ENCODE measurements at regions of chr6 and their contacts with region 1.

Region 1: DNA sequence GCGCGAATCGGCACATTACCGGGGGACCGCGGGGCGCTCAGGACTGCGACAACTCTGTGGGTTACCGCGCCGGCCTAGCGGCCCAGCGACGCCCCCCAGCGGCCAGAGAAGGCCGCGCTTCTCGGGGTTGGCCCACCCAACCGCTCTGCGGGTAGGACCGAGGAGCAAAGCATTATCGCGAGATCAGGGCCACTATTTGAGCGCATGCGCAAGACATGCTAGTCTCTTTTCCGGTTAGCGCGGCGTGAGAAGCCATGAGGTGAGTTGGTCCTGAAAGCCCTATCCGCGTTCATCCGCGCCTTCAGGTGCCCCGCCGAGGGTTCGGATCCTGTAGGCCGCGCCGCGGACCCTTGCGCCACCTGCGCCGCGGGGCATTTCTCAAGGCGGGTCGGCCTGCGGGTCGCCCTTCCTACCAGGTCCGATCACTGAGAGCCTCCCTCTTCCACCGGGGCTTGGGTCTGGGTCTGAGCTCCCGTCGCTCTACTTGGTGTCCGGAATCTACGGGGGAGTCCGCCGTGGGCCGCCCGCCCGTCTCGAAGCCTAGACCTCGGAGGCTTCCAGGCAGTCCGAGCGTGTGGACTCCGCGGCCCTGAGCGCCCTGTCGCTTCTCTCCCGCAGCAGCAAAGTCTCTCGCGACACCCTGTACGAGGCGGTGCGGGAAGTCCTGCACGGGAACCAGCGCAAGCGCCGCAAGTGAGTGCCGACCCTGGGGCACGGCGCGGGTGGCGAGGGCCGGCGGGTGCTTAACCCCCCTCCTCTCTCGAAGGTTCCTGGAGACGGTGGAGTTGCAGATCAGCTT is at the start of gene RPL10A:
- DNase-seq: peak; percentile 93
- H3K4me3 Mint-ChIP-seq: peak within 1 kb of the TSS; percentile 97
- H3K27ac Mint-ChIP-seq: peak within 1 kb of the TSS; percentile 98
- H3K4me1 Mint-ChIP-seq: peaks cover 36% of the 10 kb centered on the region
- H3K27me3 Mint-ChIP-seq: no peaks in the 10 kb centered on the region
- total RNA-seq, gene RPL10A: 1,580 and 1,584 TPM in 2 replicates

Region 2: DNA sequence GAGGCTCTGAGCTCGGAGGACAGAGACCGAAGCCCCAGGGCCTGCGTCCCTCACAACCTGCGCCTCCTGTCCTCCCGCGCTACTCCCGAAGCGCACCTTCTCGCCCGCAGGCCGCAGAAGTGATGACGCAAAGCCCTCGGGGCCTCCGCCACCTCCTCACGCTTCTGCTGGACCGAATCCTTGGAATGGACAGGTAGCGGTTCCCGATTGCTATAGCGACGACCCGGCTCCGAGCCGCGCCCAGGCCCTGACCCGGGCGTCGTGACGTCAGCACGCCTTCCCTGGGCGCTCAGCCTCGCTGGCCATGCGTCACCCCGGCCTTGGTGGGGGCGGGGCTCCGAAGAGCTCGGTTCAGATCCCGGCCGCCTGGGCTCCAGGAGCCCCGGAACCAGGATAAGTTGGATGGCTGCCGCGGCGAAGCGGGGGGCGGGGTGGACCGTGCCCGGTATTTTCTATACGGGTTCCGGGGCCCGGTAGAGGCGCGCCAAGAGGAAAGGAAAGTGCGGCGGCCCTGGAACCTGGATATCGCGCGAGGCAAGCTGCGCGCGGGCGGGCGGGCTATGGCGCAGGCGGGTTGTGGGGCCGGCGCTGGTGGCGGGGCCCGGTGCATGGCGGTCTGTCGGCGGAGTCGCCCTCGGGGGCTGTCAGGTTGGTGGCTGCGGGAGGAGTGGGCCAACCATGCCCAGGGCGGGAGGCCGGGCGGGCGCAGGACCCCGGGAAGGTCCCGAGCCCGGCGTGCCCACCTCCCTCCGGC is 209.0 kb before region 1 on chr6 and contains the start of gene ZNF76:
- intact Hi-C with region 1: loop called (anchors 1 kb)
- DNase-seq: peak; percentile 87
- H3K4me3 Mint-ChIP-seq: peak within 1 kb of the TSS; percentile 96
- H3K27ac Mint-ChIP-seq: peak within 1 kb of the TSS; percentile 88
- H3K4me1 Mint-ChIP-seq: peaks cover 40% of the 10 kb centered on the region
- H3K27me3 Mint-ChIP-seq: no peaks in the 10 kb centered on the region
- total RNA-seq, gene ZNF76: 32.8 and 33.1 TPM in 2 replicates

Region 3: GRCh38 chr6:35485402-35485877 is 17.1 kb after region 1 on chr6:
- intact Hi-C with region 1: no loop called
- DNase-seq: no peak
- H3K4me3 Mint-ChIP-seq: no peak overlapping the region
- H3K27ac Mint-ChIP-seq: no peak overlapping the region
- H3K4me1 Mint-ChIP-seq: no peaks in the 10 kb centered on the region
- H3K27me3 Mint-ChIP-seq: peaks cover 2% of the 10 kb centered on the region

Region 4: GRCh38 chr6:35496841-35497570 is 28.6 kb after region 1 on chr6 and contains the start of gene TEAD3:
- intact Hi-C with region 1: loop called (anchors 1 kb)
- DNase-seq: peak; percentile 38
- H3K4me3 Mint-ChIP-seq: peak within 1 kb of the TSS; percentile 73
- H3K27ac Mint-ChIP-seq: peak within 1 kb of the TSS; percentile 65
- H3K4me1 Mint-ChIP-seq: peaks cover 5% of the 10 kb centered on the region
- H3K27me3 Mint-ChIP-seq: peaks cover 26% of the 10 kb centered on the region
- total RNA-seq, gene TEAD3: 1.5 and 2.0 TPM in 2 replicates

Region 5: GRCh38 chr6:35552285-35552917 is 84.0 kb after region 1 on chr6:
- intact Hi-C with region 1: loop called (anchors 2 kb)
- DNase-seq: peak; percentile 40
- H3K4me3 Mint-ChIP-seq: no peak overlapping the region
- H3K27ac Mint-ChIP-seq: no peak overlapping the region
- H3K4me1 Mint-ChIP-seq: no peaks in the 10 kb centered on the region
- H3K27me3 Mint-ChIP-seq: peaks cover 14% of the 10 kb centered on the region

Region 6: GRCh38 chr6:36386495-36387439 is 918.4 kb after region 1 on chr6:
- intact Hi-C with region 1: no loop called
- DNase-seq: no peak
- H3K4me3 Mint-ChIP-seq: peak overlapping the region; percentile 92
- H3K27ac Mint-ChIP-seq: peak overlapping the region; percentile 82
- H3K4me1 Mint-ChIP-seq: peaks cover 44% of the 10 kb centered on the region
- H3K27me3 Mint-ChIP-seq: peaks cover 31% of the 10 kb centered on the region

Measured in activated T-helper 1 cell treated with anti-CD3 and anti-CD28 coated beads, Interleukin-12 subunit alpha, Interleukin-12 subunit beta, Interleukin-2, Interleukin-4 antibody, amounts not matched to agents 30 ng/mL and 10 ng/mL and 1 ng/mL, durations not matched to agents 14 hours and 24 hours and 36 hours (primary cell).